ENCODE measurements at regions of chr3 and their contacts with region 1.

Region 1: DNA sequence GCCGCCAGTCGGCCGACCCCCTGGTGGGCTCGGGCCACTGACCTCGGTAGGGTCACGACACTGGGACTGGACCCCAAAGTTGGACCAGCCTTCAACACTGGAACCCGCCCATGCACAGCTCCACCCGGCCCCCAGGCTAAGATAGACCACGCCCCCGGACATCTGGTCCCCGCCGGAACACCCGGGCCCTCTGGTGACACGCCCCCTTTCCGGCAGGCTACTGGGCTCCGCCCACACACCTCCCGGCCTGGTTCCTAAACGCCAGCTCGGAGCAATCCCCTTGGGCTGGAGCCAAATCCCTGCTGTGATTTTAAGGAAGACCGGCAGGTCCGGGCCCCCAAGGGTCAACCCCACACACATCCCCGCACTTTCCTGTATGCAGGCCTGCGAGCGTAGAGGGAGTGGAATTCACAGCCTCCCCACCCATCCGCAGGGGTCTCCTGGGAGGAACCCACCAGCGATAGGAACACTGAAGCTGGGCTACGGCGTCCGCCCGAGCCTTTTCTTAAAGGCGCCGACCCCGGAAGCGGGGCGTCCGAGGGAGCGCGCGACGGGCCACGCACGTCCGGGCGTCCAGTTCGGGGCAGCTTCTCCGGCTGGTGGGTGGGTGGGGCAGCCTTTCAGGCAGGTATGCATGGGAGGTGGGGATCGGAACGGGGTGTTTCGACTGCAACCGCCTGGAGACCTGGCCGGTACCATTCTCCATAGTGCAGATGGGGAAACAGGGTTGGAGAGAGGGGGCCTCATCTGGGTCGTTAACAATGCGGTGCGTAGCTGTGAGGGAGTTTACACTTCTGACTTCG is at the start of gene HEMK1:
- DNase-seq: peak; percentile 98 to 99
- ATAC-seq: peak; percentile 85 to 95 (median 90)
- H3K4me3 ChIP-seq: peak within 1 kb of the TSS; percentile 35 to 92 (median 78)
- H3K27ac ChIP-seq: peak within 1 kb of the TSS; percentile 85 to 95 (median 92)
- H3K4me1 ChIP-seq: peaks cover 11 to 69% (median 47%) of the 10 kb centered on the region in 9 donors
- H3K27me3 ChIP-seq: no peaks in the 10 kb centered on the region
- CTCF ChIP-seq: no peak
- total RNA-seq, gene HEMK1: 10.6 to 19.0 (median 14.8) TPM

Region 2: DNA sequence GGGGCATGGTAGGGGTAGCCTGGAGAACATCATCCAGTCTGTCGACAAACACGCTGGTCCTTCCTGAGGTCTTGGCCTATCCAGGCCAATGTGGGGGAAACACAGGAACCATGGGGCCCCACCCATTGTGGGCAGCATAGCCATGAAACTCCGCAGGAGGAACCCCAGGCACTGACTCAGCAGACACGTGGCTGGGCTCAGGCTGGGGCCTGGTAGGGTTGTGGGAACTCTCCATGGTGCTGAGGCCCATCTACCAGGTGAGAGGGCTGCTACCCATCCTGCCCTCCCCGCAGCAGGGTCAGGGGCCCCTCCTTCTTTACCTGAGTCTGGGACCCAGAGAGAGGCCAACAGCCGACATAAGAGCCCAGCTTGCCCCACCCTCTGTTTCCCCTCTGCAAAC is 43.2 kb before region 1 on chr3:
- intact Hi-C with region 1: no loop called
- DNase-seq: no peak
- ATAC-seq: peak in 6 of 8 donors; percentile 37 to 76 (median 58)
- H3K4me3 ChIP-seq: no peak overlapping the region
- H3K27ac ChIP-seq: no peak overlapping the region
- H3K4me1 ChIP-seq: no peaks in the 10 kb centered on the region
- H3K27me3 ChIP-seq: peaks cover 0 to 24% (median 12%) of the 10 kb centered on the region in 7 donors
- CTCF ChIP-seq: no peak

Region 3: GRCh38 chr3:50583897-50584296 is 14.7 kb after region 1 on chr3:
- intact Hi-C with region 1: loop called in 1 of 10 experiments (anchors 1 kb)
- DNase-seq: peak; percentile 83 to 86
- ATAC-seq: peak; percentile 62 to 93 (median 74)
- H3K4me3 ChIP-seq: no peak overlapping the region
- H3K27ac ChIP-seq: peak overlapping the region; percentile 79 to 92 (median 86)
- H3K4me1 ChIP-seq: peaks cover 19 to 81% (median 60%) of the 10 kb centered on the region in 9 donors
- H3K27me3 ChIP-seq: no peaks in the 10 kb centered on the region
- CTCF ChIP-seq: peak in 1 of 9 donors; percentile 3

Region 4: GRCh38 chr3:50617911-50618481 is 48.8 kb after region 1 on chr3:
- intact Hi-C with region 1: loop called in 9 of 10 experiments (anchors 1 to 2 kb)
- DNase-seq: peak; percentile 54 to 63
- ATAC-seq: peak in 6 of 8 donors; percentile 5 to 51 (median 26)
- H3K4me3 ChIP-seq: peak overlapping the region; percentile 76 to 98 (median 92)
- H3K27ac ChIP-seq: peak overlapping the region; percentile 85 to 98 (median 96)
- H3K4me1 ChIP-seq: peaks cover 9 to 81% (median 63%) of the 10 kb centered on the region in 9 donors
- H3K27me3 ChIP-seq: no peaks in the 10 kb centered on the region
- CTCF ChIP-seq: no peak

Region 5: DNA sequence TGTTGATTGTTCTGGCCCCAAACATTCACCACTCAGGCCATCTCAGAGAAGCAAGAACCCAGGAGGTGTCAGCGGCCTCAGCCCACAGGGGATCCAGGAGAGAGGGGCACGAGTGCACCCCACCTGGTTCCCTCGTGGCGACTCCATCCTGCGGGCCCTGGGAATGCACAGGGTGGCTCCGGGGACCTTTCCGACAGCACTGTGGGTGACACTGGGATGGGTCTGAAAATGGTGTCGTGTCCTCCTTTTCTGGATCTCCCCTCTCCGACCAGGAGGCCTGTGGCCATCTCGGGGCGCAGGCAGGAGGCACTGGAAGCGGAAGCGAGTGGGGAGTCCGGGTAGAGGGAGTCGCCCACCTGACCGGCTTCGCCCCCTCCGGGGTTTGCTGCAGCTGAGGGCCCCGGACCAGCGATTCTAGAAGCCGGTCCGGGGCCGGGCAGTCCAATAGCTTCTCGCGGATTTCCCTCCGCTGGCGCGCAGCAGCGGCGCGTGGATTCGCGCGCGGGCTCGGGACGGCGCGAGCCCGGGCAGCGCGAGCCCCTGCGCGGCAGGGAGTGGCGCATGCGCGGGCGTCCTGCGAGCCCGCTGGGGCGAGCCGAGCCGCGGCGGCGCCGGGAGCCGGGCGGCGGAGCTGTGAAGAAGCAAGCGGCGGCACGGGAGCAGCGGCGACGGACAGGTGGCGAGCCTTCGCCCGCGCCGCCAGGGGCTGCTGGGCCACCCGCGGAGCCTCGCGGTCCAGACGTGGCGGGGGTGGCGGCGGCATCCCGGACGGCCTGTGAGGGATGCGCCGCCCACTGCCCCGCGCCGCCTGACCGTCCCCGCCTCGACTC is 105.4 kb after region 1 on chr3 and contains the start of gene DOCK3:
- intact Hi-C with region 1: loop called in 1 of 10 experiments (anchors 10 kb)
- DNase-seq: peak; percentile 23 to 69
- ATAC-seq: peak; percentile 77 to 93 (median 87)
- H3K4me3 ChIP-seq: peak within 1 kb of the TSS in 9 of 10 donors; percentile 39 to 57 (median 51)
- H3K27ac ChIP-seq: no peak within 1 kb of the TSS
- H3K4me1 ChIP-seq: peaks cover 0 to 16% (median 5%) of the 10 kb centered on the region in 9 donors
- H3K27me3 ChIP-seq: peaks cover 3 to 72% (median 56%) of the 10 kb centered on the region in 7 donors
- CTCF ChIP-seq: no peak
- total RNA-seq, gene DOCK3: 4.3 to 6.6 (median 4.7) TPM